ENCODE measurements at regions of chr11 and their contacts with region 1.

Region 1: DNA sequence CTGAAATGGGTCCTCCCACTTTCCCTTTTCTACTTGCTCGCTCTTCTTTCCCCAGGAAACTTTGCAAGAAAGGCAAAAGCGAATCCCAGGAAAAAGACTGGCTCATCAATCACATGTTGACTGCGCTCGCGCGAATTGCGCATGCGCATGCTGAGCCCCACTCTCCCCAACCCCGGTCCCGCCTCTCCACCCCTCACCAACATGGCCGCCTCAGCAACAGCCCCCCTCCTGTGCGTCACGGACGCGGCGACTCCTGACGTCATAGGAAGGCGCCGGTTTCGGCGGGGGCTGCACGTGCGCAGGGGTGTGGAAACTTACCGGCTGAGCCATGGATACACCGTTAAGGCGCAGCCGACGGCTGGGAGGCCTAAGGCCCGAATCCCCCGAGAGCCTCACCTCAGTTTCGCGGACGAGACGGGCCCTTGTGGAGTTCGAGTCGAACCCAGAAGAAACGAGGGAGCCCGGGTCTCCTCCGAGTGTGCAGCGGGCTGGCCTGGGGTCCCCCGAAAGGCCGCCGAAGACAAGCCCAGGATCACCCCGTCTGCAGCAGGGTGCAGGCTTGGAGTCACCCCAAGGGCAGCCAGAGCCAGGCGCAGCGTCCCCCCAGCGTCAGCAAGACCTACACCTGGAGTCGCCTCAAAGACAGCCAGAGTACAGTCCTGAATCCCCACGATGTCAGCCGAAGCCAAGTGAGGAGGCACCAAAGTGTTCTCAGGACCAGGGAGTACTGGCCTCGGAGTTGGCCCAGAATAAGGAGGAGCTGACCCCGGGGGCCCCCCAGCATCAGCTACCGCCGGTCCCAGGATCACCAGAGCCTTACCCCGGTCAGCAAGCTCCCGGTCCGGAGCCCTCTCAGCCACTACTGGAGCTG is at the start of gene CCDC86:
- DNase-seq: peak; percentile 94 to 96
- ATAC-seq: peak; percentile 88 to 89
- H3K4me3 ChIP-seq: peak within 1 kb of the TSS; percentile 76 to 95 (median 88)
- H3K27ac ChIP-seq: peak within 1 kb of the TSS; percentile 79 to 87 (median 83)
- H3K4me1 ChIP-seq: peaks cover 25 to 31% of the 10 kb centered on the region in 2 donors
- H3K27me3 ChIP-seq: no peaks in the 10 kb centered on the region
- CTCF ChIP-seq: peak in 2 of 5 experiments; percentile 40 to 50
- POLR2A ChIP-seq: peak; percentile 34 to 50
- total RNA-seq, gene CCDC86: 23.8 to 36.2 (median 33.2) TPM

Region 2: DNA sequence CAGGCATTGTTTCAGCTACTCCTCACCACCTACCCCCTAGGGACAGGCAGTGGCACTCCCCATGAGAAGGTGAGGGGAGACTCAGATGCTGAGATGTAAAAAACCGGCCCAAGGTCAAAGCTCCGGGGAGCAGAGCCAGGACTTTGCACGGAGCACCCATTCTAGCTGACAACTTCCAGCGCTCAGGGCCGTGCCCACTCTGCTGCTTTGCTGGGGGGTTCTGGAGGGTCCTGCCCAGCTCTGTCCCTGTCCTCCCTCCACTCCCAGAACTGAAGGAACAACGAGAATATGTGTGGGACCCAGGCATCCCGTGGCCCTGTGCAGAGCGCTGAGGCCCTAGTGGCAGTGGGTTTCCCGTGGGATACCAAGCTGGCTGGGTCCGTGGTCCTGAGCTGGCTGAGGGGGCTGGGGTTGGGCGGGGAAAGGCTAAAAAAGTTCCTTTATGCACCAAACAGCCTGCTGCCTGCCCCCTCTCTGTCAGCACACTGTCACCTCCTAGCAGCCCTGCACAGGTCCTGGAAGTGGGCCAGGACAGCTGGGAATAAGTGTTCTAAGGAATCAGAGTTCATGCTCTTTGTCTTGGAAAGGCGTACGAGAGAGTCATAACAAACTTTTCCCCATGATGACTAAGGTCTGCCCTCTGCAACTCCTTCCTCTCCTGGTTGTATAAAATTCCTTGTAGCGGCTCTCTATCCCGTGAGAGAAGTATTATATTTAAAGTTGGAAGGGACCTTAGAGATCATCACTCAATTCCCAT is 55.0 kb before region 1 on chr11:
- in situ Hi-C with region 1: no loop called
- intact Hi-C with region 1: no loop called
- DNase-seq: peak; percentile 31 to 56
- ATAC-seq: peak; percentile 74 to 76
- H3K4me3 ChIP-seq: no peak overlapping the region
- H3K27ac ChIP-seq: peak overlapping the region in 1 of 4 donors; percentile 60
- H3K4me1 ChIP-seq: no peaks in the 10 kb centered on the region
- H3K27me3 ChIP-seq: no peaks in the 10 kb centered on the region
- CTCF ChIP-seq: no peak
- POLR2A ChIP-seq: no peak

Region 3: GRCh38 chr11:60871378-60872061 is 29.5 kb after region 1 on chr11:
- in situ Hi-C with region 1: no loop called
- intact Hi-C with region 1: no loop called
- DNase-seq: no peak
- ATAC-seq: no peak
- H3K4me3 ChIP-seq: no peak overlapping the region
- H3K27ac ChIP-seq: peak overlapping the region; percentile 10 to 63 (median 51)
- H3K4me1 ChIP-seq: peaks cover 46 to 57% of the 10 kb centered on the region in 2 donors
- H3K27me3 ChIP-seq: no peaks in the 10 kb centered on the region
- CTCF ChIP-seq: peak in 1 of 5 experiments; percentile 13
- POLR2A ChIP-seq: no peak

Region 4: GRCh38 chr11:60887556-60887955 is 45.5 kb after region 1 on chr11:
- in situ Hi-C with region 1: loop called in 1 of 4 experiments (anchors 5 kb)
- intact Hi-C with region 1: no loop called
- DNase-seq: no peak
- ATAC-seq: peak; percentile 54 to 86
- H3K4me3 ChIP-seq: no peak overlapping the region
- H3K27ac ChIP-seq: no peak overlapping the region
- H3K4me1 ChIP-seq: no peaks in the 10 kb centered on the region
- H3K27me3 ChIP-seq: no peaks in the 10 kb centered on the region
- CTCF ChIP-seq: peak; percentile 22 to 51 (median 46)
- POLR2A ChIP-seq: no peak

Region 5: DNA sequence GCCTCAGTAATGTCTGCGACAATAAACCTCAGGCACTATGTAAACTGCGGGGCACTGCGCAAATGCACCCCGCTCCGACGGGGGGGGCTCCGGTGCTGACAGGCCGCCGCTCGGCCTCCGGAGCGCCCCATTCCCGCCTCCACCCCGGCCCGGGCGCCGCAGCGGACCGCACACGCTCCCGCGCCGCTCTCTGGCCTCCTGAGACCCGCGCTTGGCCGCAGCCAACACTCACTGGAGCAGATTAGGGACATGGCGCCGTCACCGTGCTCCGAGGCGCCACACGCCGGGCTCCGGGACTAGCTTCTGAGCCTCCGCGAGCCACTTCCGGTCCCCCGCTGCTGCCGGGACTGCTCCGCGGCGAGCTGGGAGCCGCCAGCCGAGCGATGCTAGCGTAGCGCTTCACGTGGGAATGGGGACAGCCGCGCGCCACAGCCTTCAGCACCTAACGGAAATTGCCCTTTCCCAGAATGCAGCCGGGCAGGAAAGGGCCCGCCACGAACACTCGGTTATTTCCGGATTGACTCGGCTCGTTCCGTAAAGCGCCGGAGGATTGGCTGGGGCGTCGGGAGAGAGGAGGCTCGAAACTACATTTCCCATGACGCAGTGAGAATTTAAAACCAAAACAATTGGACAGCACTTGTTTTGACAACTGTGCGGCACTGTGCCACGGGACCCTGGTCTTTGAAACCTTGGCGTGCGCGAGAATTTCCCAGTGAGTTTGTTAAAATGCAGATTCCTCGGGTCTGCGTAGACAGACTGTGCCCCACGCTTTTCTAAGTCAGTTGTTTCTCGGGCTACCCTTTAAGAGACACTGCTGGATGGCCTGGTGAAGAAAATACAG is 64.3 kb after region 1 on chr11 and contains the start of gene PRPF19:
- in situ Hi-C with region 1: no loop called
- intact Hi-C with region 1: loop called (anchors 1 kb)
- DNase-seq: peak; percentile 96 to 97
- ATAC-seq: peak; percentile 95 to 96
- H3K4me3 ChIP-seq: peak within 1 kb of the TSS; percentile 78 to 100 (median 94)
- H3K27ac ChIP-seq: peak within 1 kb of the TSS; percentile 90 to 100 (median 98)
- H3K4me1 ChIP-seq: peaks cover 23 to 24% of the 10 kb centered on the region in 2 donors
- H3K27me3 ChIP-seq: no peaks in the 10 kb centered on the region
- CTCF ChIP-seq: no peak
- POLR2A ChIP-seq: peak; percentile 81 to 88
- total RNA-seq, gene PRPF19: 55.5 to 75.6 (median 71.9) TPM

Region 6: GRCh38 chr11:61161190-61162091 is 319.4 kb after region 1 on chr11 and contains the start of gene VPS37C:
- in situ Hi-C with region 1: no loop called
- intact Hi-C with region 1: loop called (anchors 2 kb)
- DNase-seq: peak; percentile 67 to 77
- ATAC-seq: peak; percentile 91 to 93
- H3K4me3 ChIP-seq: peak within 1 kb of the TSS; percentile 64 to 94 (median 70)
- H3K27ac ChIP-seq: peak within 1 kb of the TSS; percentile 86 to 97 (median 96)
- H3K4me1 ChIP-seq: peaks cover 23 to 29% of the 10 kb centered on the region in 2 donors
- H3K27me3 ChIP-seq: no peaks in the 10 kb centered on the region
- CTCF ChIP-seq: peak in 2 of 5 experiments; percentile 19 to 42
- POLR2A ChIP-seq: peak; percentile 60
- total RNA-seq, gene VPS37C: 17.7 to 27.1 (median 23.5) TPM